ENCODE measurements at regions of chr13 and their contacts with region 1.

Region 1: DNA sequence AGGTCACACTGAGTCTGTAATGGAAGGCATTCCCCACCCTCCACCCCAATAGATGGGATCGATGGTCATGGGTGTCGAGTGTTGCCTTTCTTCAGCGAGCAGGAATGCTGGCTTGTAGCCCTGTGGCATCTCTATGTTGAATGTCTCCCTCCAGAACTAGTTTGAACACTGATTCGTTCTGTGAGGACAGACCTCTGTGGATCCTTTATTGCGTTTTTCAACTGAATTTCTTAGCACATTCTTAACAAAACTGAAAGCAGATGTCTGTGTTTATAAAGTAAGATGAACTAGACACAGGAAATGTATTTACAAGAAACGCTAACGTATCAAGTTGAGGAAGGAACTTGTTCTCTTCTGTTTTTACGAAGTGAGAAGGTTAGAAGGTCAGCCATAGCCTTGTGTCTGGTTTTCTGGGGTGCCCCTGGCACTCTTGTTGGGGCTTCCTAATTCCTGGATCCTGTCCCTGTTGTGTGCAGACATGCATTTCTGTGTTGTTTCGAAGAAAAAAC is 36.8 kb upstream of the TM9SF2 start:
- DNase-seq: no peak
- ATAC-seq: no peak
- H3K4me3 Mint-ChIP-seq: peak overlapping the region; percentile 11
- H3K27ac Mint-ChIP-seq: peak overlapping the region; percentile 78
- H3K4me1 Mint-ChIP-seq: peaks cover 25% of the 10 kb centered on the region
- H3K27me3 Mint-ChIP-seq: no peaks in the 10 kb centered on the region
- CTCF ChIP-seq: no peak

Region 2: GRCh38 chr13:99448546-99448945 is 15.9 kb before region 1 on chr13:
- CTCF ChIA-PET with region 1: no interaction called
- POLR2A ChIA-PET with region 1: no interaction called
- intact Hi-C with region 1: loop called (anchors 1 kb)
- DNase-seq: no peak
- ATAC-seq: no peak
- H3K4me3 Mint-ChIP-seq: no peak overlapping the region
- H3K27ac Mint-ChIP-seq: no peak overlapping the region
- H3K4me1 Mint-ChIP-seq: no peaks in the 10 kb centered on the region
- H3K27me3 Mint-ChIP-seq: no peaks in the 10 kb centered on the region
- CTCF ChIP-seq: no peak

Region 3: GRCh38 chr13:99666146-99666805 is 201.8 kb after region 1 on chr13:
- CTCF ChIA-PET with region 1: no interaction called
- POLR2A ChIA-PET with region 1: no interaction called
- intact Hi-C with region 1: no loop called
- DNase-seq: no peak
- ATAC-seq: no peak
- H3K4me3 Mint-ChIP-seq: no peak overlapping the region
- H3K27ac Mint-ChIP-seq: no peak overlapping the region
- H3K4me1 Mint-ChIP-seq: peaks cover 2% of the 10 kb centered on the region
- H3K27me3 Mint-ChIP-seq: no peaks in the 10 kb centered on the region
- CTCF ChIP-seq: no peak